ENCODE measurements at regions of chr12 and their contacts with region 1.

Region 1: DNA sequence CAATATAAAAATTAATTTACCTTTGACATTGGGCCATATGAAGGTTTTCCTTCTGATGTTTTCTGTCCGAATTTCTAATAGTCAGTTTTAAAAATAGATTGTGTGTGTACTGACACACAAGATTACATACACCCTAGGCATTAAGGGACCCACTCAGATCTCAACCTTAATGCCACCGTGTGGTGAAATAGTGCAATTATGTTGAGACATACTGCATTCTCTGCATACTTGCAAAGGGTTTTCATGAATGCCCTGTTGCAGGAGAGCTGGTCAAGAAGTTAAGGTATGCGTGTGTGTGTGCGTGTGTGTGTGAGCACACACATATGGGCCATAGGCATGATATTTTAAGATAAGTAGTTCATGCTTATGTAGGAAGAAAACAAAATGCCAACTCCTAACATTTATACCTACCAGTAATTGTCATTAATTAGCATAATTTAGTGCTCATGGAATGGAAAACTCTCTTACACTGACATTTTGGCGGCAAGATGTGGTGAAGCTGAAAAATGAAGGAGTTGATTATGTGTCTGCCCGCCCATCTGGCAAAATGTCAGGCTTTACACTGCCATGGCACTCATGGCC is 58.8 kb downstream of the PIK3C2G start:
- DNase-seq: peak; percentile 36
- ATAC-seq: peak; percentile 62; the same call in 1 of the 2 replicates
- H3K4me3 ChIP-seq: no peak overlapping the region
- H3K27ac ChIP-seq: no peak overlapping the region
- H3K4me1 ChIP-seq: no peaks in the 10 kb centered on the region
- H3K27me3 ChIP-seq: no peaks in the 10 kb centered on the region
- CTCF ChIP-seq: peak; percentile 43

Region 2: GRCh38 chr12:18139989-18140596 is 180.0 kb before region 1 on chr12:
- CTCF ChIA-PET with region 1: no interaction called
- POLR2A ChIA-PET with region 1: no interaction called
- in situ Hi-C with region 1: no loop called
- intact Hi-C with region 1: loop called (anchors 10 kb)
- DNase-seq: no peak
- ATAC-seq: no peak
- H3K4me3 ChIP-seq: no peak overlapping the region
- H3K27ac ChIP-seq: no peak overlapping the region
- H3K4me1 ChIP-seq: no peaks in the 10 kb centered on the region; the same call in 1 of the 2 replicates
- H3K27me3 ChIP-seq: no peaks in the 10 kb centered on the region
- CTCF ChIP-seq: peak; percentile 30; the same call in 1 of the 2 replicates

Region 3: GRCh38 chr12:18250313-18250916 is 69.7 kb before region 1 on chr12:
- CTCF ChIA-PET with region 1: no interaction called
- POLR2A ChIA-PET with region 1: no interaction called
- in situ Hi-C with region 1: no loop called
- intact Hi-C with region 1: loop called (anchors 2 kb)
- DNase-seq: peak; percentile 10
- ATAC-seq: no peak
- H3K4me3 ChIP-seq: no peak overlapping the region
- H3K27ac ChIP-seq: no peak overlapping the region
- H3K4me1 ChIP-seq: no peaks in the 10 kb centered on the region
- H3K27me3 ChIP-seq: no peaks in the 10 kb centered on the region
- CTCF ChIP-seq: peak; percentile 58; the same call in 1 of the 2 replicates